A673 (cell line): ENCODE measurements at regions of chr19 and their contacts with region 1.

Region 1: DNA sequence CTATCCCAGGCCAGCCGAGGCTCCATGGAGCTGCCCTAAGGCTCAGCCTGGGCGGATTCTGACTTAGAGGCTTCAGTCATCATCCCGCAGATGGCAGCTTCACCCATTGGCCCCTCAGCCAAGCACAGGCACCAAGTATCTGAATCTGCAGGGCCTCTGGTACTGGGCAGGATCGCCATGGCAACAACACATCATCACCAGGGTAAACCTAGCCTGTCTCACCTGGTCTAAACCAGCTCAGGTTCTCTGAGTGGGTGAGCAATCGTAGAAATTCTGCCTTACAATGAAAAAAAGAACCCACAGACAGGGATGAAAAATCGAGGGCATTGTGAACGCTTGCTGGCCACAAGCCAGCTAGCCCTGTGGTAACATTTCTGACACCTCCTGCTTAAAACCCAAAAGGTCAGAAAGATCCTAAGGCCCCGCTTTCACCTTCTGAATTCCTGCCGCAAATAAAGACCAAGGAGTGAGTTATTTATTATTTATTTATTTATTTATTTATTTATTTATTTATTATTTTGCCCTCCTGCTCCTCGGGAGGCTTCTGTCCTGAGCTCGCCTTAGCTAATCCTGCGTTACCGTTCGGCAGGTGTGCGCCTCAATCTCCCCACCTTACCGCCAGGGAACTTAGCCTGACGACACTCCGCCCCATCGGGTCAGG is 12.0 kb upstream of the CEACAM21 start:
- DNase-seq: no peak
- H3K4me3 ChIP-seq: peak overlapping the region; percentile 39
- H3K27ac ChIP-seq: no peak overlapping the region
- H3K4me1 ChIP-seq: peaks cover 8% of the 10 kb centered on the region
- H3K27me3 ChIP-seq: peaks cover 32% of the 10 kb centered on the region
- CTCF ChIP-seq: no peak

Region 2: GRCh38 chr19:41206926-41207750 is 356.8 kb before region 1 on chr19:
- CTCF ChIA-PET with region 1: no interaction called
- POLR2A ChIA-PET with region 1: no interaction called
- intact Hi-C with region 1: loop called (anchors 10 kb)
- DNase-seq: no peak
- H3K4me3 ChIP-seq: no peak overlapping the region
- H3K27ac ChIP-seq: no peak overlapping the region
- H3K4me1 ChIP-seq: no peaks in the 10 kb centered on the region
- H3K27me3 ChIP-seq: no peaks in the 10 kb centered on the region
- CTCF ChIP-seq: no peak

Region 3: DNA sequence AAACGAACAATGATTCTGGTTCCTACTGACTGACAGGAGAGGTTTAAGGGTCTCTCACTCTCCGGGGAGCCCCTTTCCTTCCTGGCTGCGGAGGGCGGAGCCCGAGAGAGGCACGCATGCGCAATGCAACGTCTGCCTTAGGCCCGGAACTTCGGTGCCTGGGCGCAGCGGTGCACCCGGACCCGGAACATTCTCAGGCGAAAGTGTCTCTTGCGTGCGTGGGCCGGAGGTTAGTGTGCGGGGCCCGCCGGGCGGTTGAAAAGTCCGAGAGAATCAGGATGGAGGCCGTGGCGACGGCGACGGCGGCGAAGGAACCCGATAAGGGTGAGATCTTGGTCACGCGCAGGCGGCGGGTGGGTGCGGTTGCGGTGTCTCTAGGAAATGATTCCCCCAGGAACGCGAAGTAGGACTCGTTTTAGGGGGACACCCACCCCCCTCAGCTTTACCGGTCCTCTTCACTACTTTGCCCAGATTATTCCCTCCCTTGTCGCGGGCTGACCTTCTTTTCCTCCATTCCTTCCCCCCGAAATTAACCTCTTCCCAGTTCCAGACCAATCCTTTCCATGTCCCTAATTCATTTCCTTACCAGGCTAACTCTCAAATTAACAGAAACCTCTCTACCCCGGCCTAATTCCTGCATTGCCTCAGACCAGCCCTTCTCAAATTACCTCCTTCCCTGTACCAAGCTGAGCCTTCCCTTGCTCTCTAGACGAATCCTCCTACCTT is 253.8 kb before region 1 on chr19 and contains the start of gene CCDC97:
- CTCF ChIA-PET with region 1: no interaction called
- POLR2A ChIA-PET with region 1: no interaction called
- intact Hi-C with region 1: loop called (anchors 1 kb)
- DNase-seq: peak; percentile 92
- H3K4me3 ChIP-seq: peak within 1 kb of the TSS; percentile 78
- H3K27ac ChIP-seq: peak within 1 kb of the TSS; percentile 96
- H3K4me1 ChIP-seq: peaks cover 12% of the 10 kb centered on the region
- H3K27me3 ChIP-seq: no peaks in the 10 kb centered on the region
- CTCF ChIP-seq: no peak
- total RNA-seq, gene CCDC97: 40.8 and 41.8 TPM in 2 replicates

Region 4: DNA sequence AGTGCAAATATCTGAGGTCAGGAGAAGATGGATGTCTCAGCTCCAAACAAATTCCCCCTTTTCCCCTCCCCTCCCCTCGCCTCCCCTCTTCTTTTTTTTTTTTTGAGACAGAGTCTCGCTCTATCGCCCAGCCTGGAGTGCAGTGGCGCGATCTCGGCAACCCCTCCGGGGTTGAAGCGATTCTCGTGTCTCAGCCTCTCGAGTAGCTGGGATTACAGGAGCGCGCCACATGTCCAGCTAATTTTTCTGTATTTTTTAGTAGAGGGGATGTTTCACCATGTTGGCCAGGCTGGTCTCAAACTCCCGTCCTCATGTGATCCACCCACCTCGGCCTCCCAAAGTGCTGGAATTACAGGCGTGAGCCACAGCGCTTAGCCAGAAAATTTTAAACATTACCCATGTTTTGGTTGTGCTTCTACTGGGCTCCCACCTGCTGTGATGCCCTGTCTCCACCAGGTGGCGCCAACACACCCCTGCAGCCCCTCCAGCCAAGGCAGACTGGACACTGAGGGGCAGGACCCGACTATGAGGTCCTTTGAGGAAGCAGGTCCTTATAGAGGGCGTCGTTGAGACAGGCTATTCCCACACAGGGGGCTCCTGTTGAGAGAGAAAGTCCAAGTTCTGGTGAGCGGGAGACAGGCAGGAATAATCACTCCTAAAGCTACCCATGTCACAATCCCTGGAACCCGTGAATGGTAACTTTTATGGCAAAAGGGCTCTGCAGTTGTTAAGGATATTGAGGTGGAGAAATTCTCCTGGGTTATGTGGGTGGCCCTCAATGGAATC is 114.7 kb before region 1 on chr19:
- CTCF ChIA-PET with region 1: interaction called, 44 read pairs
- POLR2A ChIA-PET with region 1: no interaction called
- intact Hi-C with region 1: loop called (anchors 1 kb)
- DNase-seq: peak; percentile 75
- H3K4me3 ChIP-seq: peak overlapping the region; percentile 42
- H3K27ac ChIP-seq: no peak overlapping the region
- H3K4me1 ChIP-seq: peaks cover 6% of the 10 kb centered on the region
- H3K27me3 ChIP-seq: no peaks in the 10 kb centered on the region
- CTCF ChIP-seq: peak; percentile 98

Region 5: GRCh38 chr19:41501854-41502253 is 62.1 kb before region 1 on chr19:
- CTCF ChIA-PET with region 1: no interaction called
- POLR2A ChIA-PET with region 1: no interaction called
- intact Hi-C with region 1: no loop called
- DNase-seq: peak; percentile 14
- H3K4me3 ChIP-seq: no peak overlapping the region
- H3K27ac ChIP-seq: no peak overlapping the region
- H3K4me1 ChIP-seq: peaks cover 9% of the 10 kb centered on the region
- H3K27me3 ChIP-seq: peaks cover 2% of the 10 kb centered on the region
- CTCF ChIP-seq: no peak

Region 6: DNA sequence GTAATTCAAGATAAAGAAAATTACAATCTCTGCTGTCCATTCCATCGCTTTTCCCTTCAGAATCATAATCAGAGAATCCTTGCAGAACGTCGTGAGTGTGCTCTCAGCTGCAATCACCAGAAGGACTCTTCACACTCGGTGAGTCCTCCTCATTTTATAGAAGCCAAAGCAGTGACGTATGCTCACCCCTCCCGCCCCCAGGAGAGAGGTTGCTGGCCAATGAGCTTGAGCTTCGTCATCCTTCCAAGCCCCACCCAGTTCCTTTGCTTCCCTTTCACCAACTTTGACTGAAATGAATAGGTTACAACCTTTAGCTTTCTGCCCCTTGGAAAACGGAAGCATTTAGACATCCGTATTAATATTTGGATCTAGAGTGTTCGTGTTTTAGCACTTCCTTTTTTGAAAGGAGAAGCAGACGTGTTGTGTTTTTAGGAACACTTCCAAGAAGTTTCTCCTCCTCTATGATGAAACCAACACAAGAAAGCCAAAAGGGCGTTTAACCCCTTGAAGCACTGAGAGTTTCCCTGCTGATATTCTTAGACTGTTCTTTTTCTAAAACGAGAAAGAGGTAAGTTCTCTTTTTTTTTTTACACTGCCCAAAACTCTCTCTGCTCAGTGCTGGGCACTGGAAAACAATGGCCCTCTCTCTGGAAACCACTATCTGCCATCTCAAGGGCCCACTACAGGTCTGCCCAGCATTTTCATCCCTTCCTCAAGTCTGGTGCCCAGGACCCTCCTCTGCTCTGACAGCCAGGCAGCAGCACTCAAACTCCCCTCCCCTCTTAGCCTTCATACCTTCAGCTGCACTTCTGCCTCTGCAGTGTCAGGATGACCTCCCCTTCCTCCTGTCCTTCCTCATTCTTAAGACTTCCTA is 32.3 kb before region 1 on chr19:
- CTCF ChIA-PET with region 1: interaction called, 10 read pairs
- POLR2A ChIA-PET with region 1: no interaction called
- intact Hi-C with region 1: no loop called
- DNase-seq: peak; percentile 91
- H3K4me3 ChIP-seq: peak overlapping the region; percentile 2
- H3K27ac ChIP-seq: peak overlapping the region; percentile 61
- H3K4me1 ChIP-seq: peaks cover 10% of the 10 kb centered on the region
- H3K27me3 ChIP-seq: peaks cover 9% of the 10 kb centered on the region
- CTCF ChIP-seq: no peak

Region 7: DNA sequence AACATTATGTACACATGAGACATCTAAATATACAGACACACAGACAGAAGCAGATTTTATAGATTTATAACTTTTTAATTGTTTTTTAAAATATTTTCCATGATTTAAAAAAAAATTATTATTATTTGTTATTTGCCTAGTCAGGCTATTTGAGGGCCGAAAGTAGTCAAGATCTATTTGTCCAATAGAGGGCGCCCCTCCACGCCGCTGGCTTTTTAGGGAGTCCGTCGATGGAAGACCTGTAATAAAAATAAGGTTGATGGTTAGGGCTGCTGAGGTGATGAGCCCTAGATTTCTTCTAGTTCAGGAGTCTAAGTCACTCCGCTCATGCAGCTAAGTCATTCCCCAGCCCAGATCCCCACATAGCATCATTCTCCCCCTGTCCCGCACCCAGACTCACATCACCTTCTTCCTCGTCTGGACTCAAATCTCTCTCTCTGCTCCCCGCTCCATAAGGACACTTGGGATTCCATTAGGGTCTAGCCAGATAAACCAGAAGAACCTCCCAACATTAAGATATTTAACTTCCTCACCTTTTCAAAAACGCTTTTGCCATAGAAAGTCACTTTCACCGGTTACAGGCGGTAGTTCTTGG is 21.9 kb before region 1 on chr19:
- CTCF ChIA-PET with region 1: no interaction called
- POLR2A ChIA-PET with region 1: no interaction called
- intact Hi-C with region 1: loop called (anchors 2 kb)
- DNase-seq: peak; percentile 82
- H3K4me3 ChIP-seq: no peak overlapping the region
- H3K27ac ChIP-seq: no peak overlapping the region
- H3K4me1 ChIP-seq: no peaks in the 10 kb centered on the region
- H3K27me3 ChIP-seq: no peaks in the 10 kb centered on the region
- CTCF ChIP-seq: peak; percentile 84

Region 8: DNA sequence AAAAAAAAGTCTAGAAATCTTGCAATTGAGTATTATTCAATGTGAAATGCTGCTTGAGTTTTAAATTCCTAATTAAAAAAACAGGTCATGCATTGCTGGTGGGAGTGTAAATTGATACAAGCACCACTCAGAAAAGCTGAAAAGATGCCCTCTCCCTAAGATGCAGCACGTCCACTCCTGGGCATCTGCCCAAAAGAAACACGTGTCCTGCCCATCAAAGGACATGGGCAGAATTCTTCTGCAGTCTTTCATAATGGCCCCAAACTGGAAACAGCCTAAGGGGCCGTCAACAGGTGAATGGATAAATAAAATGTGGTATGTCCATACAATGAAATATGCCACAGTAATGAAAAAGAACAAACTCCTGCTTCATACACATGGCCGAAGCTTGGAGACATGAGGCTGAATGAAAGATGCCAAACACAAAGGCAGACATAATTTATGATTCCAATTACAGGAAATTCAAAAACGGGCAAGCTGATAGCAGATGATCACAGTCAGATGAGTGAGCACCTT is 560.5 kb after region 1 on chr19:
- CTCF ChIA-PET with region 1: no interaction called
- POLR2A ChIA-PET with region 1: interaction called, 13 read pairs
- intact Hi-C with region 1: no loop called
- DNase-seq: no peak
- H3K4me3 ChIP-seq: no peak overlapping the region
- H3K27ac ChIP-seq: no peak overlapping the region
- H3K4me1 ChIP-seq: peaks cover 11% of the 10 kb centered on the region
- H3K27me3 ChIP-seq: no peaks in the 10 kb centered on the region
- CTCF ChIP-seq: no peak